Activated CD4-positive, alpha-beta T cell treated with anti-CD3 and anti-CD28 coated beads, Interleukin-2, amount 10 ng/mL, durations not matched to agents 24 days and 14 days (primary cell): ENCODE measurements at regions of chr22 and their contacts with region 1.

Region 1: GRCh38 chr22:32411829-32412592 is at the start of gene RTCB:
- DNase-seq: peak; percentile 98
- H3K4me3 Mint-ChIP-seq: peak within 1 kb of the TSS; percentile 97
- H3K27ac Mint-ChIP-seq: peak within 1 kb of the TSS; percentile 96
- H3K4me1 Mint-ChIP-seq: peaks cover 40% of the 10 kb centered on the region
- H3K27me3 Mint-ChIP-seq: peaks cover 9% of the 10 kb centered on the region
- total RNA-seq, gene RTCB: 104 and 105 TPM in 2 replicates

Region 2: GRCh38 chr22:32058656-32059260 is 353.3 kb before region 1 on chr22:
- intact Hi-C with region 1: no loop called
- DNase-seq: no peak
- H3K4me3 Mint-ChIP-seq: no peak overlapping the region
- H3K27ac Mint-ChIP-seq: no peak overlapping the region
- H3K4me1 Mint-ChIP-seq: no peaks in the 10 kb centered on the region
- H3K27me3 Mint-ChIP-seq: peaks cover 54% of the 10 kb centered on the region

Region 3: DNA sequence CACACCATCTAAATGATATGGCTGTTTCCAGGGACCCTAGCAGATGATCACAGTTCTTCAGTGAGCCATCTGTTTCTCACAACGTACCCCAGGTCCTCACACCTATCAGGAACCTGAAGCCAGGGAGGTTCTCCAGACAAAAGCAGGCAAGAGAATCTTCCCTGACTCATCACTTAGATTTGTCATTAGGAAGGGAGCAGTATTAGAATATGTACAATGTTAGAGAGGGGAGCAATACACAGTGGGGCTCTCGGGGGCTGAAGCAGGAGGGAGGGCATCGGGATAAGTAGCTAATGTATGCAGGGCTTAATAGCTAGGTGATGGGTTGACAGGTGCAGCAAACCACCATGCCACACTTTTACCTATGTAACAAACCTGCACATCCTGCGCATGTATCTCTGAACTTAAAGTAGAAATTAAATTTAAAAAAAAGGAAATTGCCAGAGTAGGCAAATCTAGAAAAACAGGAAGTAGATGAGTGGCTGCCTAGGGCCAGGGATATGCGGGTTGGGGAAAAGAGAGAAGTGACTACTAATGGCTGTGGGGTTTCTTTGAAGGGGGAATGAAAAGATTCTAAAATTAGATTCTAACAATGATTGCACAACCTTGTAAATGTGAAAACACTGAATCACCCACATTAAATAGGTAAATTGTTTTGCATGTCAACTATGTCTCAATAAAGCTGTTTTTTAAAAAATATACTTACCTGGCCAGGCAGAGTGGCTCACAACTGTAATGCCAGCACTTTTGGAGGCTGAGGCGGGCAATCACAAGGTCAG is 267.3 kb before region 1 on chr22:
- intact Hi-C with region 1: loop called (anchors 5 kb)
- DNase-seq: no peak
- H3K4me3 Mint-ChIP-seq: no peak overlapping the region
- H3K27ac Mint-ChIP-seq: peak overlapping the region; percentile 80
- H3K4me1 Mint-ChIP-seq: peaks cover 43% of the 10 kb centered on the region
- H3K27me3 Mint-ChIP-seq: peaks cover 3% of the 10 kb centered on the region